PC-3 (cell line): ENCODE measurements at regions of chr3 and their contacts with region 1.

Region 1: DNA sequence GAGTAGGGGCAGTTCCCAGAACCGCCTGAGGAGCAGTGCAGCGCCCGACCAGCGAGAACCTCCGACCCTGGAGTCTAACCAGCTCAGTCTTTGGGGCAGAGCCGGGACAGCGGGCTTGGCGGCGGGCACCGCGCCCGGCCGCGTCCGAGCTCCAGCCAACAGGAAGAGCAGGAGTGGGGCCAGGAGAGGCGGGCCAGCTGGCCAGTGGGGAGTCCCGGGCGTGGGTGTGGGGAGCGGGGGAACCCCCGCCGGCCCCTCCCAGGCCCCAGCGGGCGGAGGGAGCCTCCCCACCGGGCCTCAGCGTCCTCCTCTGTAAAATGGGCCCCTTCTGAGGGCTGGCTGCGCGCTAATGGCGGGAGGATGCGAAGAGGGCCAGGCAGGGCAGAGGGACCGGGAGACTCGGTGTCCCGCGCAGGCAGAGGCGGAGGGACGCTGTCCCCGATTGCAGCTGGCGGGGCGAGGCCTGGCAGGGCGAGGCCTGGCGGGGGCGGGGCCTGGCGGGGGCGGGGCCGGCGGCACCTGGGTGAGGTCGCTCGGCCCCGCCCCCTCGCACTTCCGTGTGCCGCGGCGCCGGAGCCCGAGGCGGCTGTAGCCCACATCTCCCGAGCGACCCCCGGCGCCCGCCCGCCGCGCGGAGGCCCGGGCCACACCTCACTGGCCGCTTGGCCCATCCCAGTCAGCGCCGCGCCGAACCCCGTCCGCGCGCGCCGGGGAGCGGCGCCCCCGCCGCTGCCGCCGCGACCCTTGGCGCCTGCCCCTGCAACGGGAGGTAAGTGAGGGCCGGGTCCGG is at the start of gene PRKCD:
- DNase-seq: peak; percentile 85
- ATAC-seq: peak; percentile 77
- H3K4me3 ChIP-seq: peak within 1 kb of the TSS; percentile 96
- H3K27ac ChIP-seq: peak within 1 kb of the TSS; percentile 74
- H3K4me1 ChIP-seq: peaks cover 42% of the 10 kb centered on the region
- H3K27me3 ChIP-seq: no peaks in the 10 kb centered on the region
- CTCF ChIP-seq: peak; percentile 44
- total RNA-seq, gene PRKCD: 7.8 and 18.7 TPM in 2 replicates

Region 2: DNA sequence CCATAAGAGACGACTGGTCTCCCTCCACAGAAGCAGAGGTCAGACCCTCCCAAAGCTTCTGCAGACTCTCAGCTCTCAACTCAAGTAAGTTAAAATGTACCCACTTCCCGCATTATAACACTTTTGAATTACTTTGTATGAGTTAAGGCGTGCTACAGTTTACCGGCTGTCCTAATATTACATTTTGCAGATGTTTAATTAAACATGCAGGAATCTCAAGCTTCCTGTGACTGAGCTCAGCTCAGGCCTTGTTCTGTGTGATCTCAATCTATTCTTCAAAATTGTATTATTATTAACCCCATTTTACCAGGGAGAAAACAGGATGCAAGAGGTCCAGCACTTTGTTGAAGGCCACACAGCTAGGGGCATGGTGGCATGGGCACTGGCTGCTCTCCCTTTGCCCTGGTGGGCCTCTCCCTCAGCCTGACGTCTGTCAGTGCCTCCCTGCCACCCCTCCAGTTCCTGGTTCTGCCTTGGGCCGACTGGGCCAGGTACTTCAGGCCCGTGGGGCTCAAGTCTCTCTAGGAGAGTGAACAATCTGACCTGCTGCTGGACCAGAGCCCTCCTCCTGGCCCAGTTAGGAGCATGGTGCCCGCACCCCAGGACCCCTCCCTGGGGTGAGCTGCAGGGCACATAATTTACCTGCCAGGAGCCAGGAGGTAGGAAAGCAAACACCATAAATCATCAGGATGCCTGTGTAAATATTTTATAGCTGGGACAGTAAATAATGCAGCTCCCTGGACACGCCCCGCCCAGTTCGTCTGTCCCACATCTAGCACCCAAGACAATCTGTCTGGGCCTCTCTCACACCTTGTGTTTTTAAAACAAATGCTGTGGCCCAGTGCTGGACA is 15.8 kb before region 1 on chr3:
- CTCF ChIA-PET with region 1: interaction called, 6 read pairs
- POLR2A ChIA-PET with region 1: interaction called, 4 read pairs
- intact Hi-C with region 1: loop called (anchors 2 kb)
- DNase-seq: peak; percentile 85
- ATAC-seq: peak; percentile 71
- H3K4me3 ChIP-seq: peak overlapping the region; percentile 31; the same call in 1 of the 2 replicates
- H3K27ac ChIP-seq: peak overlapping the region; percentile 79
- H3K4me1 ChIP-seq: peaks cover 57% of the 10 kb centered on the region
- H3K27me3 ChIP-seq: no peaks in the 10 kb centered on the region
- CTCF ChIP-seq: no peak